ENCODE measurements at regions of chr12 and their contacts with region 1.

Region 1: GRCh38 chr12:2057041-2057794 is 4.4 kb downstream of the CACNA1C start:
- DNase-seq: peak; percentile 58 to 78 (median 69)
- ATAC-seq: peak; percentile 8 to 22 (median 8)
- H3K4me3 ChIP-seq: peak overlapping the region in 2 of 12 donors; percentile 1 to 39
- H3K27ac ChIP-seq: peak overlapping the region in 8 of 12 donors; percentile 14 to 91 (median 56)
- H3K4me1 ChIP-seq: peaks cover 0 to 80% (median 28%) of the 10 kb centered on the region in 12 donors
- H3K27me3 ChIP-seq: peaks cover 0 to 32% (median 0%) of the 10 kb centered on the region in 9 donors
- CTCF ChIP-seq: peak; percentile 59 to 81 (median 70)
- POLR2A ChIP-seq: no peak

Region 2: GRCh38 chr12:1795785-1796514 is 261.3 kb before region 1 on chr12:
- intact Hi-C with region 1: loop called in 1 of 10 experiments (anchors 5 kb)
- DNase-seq: peak; percentile 92 to 98 (median 96)
- ATAC-seq: peak; percentile 92 to 96 (median 94)
- H3K4me3 ChIP-seq: peak overlapping the region; percentile 47 to 79 (median 64)
- H3K27ac ChIP-seq: peak overlapping the region; percentile 49 to 95 (median 84)
- H3K4me1 ChIP-seq: peaks cover 8 to 46% (median 26%) of the 10 kb centered on the region in 12 donors
- H3K27me3 ChIP-seq: no peaks in the 10 kb centered on the region
- CTCF ChIP-seq: peak; percentile 92 to 100 (median 99)
- POLR2A ChIP-seq: peak in 1 of 2 donors; percentile 70

Region 3: GRCh38 chr12:2256915-2257314 is 199.7 kb after region 1 on chr12:
- intact Hi-C with region 1: loop called in 1 of 10 experiments (anchors 10 kb)
- DNase-seq: peak in 1 of 5 donors; percentile 59
- ATAC-seq: peak; percentile 18 to 65 (median 53)
- H3K4me3 ChIP-seq: no peak overlapping the region
- H3K27ac ChIP-seq: peak overlapping the region in 5 of 12 donors; percentile 15 to 40 (median 31)
- H3K4me1 ChIP-seq: peaks cover 5 to 72% (median 42%) of the 10 kb centered on the region in 12 donors
- H3K27me3 ChIP-seq: no peaks in the 10 kb centered on the region
- CTCF ChIP-seq: no peak
- POLR2A ChIP-seq: no peak

Region 4: GRCh38 chr12:2284857-2285256 is 227.6 kb after region 1 on chr12:
- intact Hi-C with region 1: loop called in 4 of 10 experiments (anchors 5 kb)
- DNase-seq: peak; percentile 79 to 92 (median 89)
- ATAC-seq: peak; percentile 77 to 87 (median 82)
- H3K4me3 ChIP-seq: no peak overlapping the region
- H3K27ac ChIP-seq: peak overlapping the region in 10 of 12 donors; percentile 58 to 82 (median 76)
- H3K4me1 ChIP-seq: peaks cover 4 to 88% (median 79%) of the 10 kb centered on the region in 12 donors
- H3K27me3 ChIP-seq: no peaks in the 10 kb centered on the region
- CTCF ChIP-seq: peak; percentile 45 to 77 (median 64)
- POLR2A ChIP-seq: no peak

Region 5: DNA sequence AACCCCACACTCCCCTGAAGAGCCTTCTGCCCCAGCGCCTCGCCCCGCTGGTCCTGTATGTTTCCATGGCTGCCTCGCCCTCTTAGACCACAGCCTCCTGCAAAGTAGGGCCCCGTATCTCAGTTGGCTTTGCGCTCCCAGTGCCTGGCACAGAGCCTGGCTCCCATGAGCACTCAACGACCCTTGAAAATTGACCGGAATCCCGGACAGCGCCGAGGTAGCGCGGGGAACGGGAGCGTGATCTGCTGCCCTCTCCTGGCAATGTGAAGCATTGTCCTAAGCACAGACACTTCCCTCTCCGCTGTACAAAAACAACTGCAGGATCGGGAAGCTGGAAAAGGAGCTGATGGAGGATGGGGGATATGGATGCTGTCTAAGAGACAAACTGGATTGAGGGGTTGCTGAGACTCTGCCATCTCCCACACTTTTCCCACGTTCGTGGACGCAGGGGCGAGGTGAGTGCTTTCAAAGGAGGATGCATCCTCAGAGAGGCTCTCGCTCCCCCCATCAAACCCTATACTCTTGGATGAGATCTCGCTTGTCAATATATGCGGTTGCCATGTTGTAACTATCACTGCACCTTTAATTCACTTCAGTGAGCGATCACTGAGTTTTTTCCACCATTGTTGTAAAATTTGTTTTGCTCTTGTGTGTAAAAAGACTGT is 726.9 kb after region 1 on chr12:
- intact Hi-C with region 1: loop called in 1 of 10 experiments (anchors 10 kb)
- DNase-seq: peak; percentile 69 to 84 (median 78)
- ATAC-seq: peak; percentile 84 to 95 (median 95)
- H3K4me3 ChIP-seq: peak overlapping the region in 9 of 12 donors; percentile 13 to 35 (median 27)
- H3K27ac ChIP-seq: no peak overlapping the region
- H3K4me1 ChIP-seq: peaks cover 0 to 10% (median 4%) of the 10 kb centered on the region in 12 donors
- H3K27me3 ChIP-seq: peaks cover 0 to 6% (median 0%) of the 10 kb centered on the region in 9 donors
- CTCF ChIP-seq: peak; percentile 83 to 96 (median 90)
- POLR2A ChIP-seq: no peak

Measured in heart left ventricle (tissue), 16 donors.